Natural killer cell (primary cell): ENCODE measurements at regions of chr1 and their contacts with region 1.

Region 1: DNA sequence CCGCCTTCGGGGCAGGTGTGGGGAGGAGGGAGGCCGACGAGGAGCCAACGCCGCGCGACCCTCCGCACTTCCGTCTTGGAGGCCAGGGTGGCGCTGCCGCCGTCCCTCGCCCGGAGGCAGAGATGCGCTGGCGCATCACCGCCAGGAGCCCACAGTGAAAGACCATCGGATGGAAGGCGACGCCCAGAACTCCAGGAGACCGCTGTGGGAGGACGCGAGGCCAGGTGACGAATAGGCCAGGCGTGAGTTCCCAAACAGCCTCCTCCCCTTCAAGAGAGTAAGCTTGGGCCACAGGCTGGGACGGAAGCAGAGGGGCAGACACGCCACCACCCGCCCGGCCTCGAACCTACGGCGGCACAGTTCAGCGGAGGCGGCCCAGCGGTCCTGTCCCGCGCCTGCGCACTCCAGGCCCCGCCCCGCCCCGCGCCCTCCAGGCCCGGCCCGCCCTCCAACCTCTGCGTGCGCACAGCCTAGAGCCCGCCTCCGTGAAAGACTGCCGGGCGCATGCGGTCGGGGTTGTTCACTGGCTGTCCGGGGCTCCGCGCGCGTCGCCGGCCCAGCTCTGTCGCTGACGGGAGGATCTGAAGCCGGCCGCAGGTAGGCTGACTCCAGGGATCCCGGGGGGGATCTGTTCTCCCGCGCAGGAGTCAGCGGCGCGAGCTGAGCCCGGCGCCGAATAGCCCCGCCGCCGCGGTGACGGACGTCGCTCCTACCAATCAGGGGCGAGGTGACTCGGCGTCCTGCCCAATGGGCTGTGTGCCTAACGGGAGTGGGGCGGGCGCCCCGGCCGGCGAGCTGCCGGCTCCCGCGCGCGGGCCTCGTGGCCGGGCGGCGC is at the start of gene CTPS1:
- DNase-seq: peak; percentile 95
- ATAC-seq: peak; percentile 82 to 91 (median 85)
- H3K4me3 ChIP-seq: peak within 1 kb of the TSS; percentile 90
- H3K4me3 Mint-ChIP-seq: peak within 1 kb of the TSS; percentile 96
- H3K27ac ChIP-seq: peak within 1 kb of the TSS; percentile 97
- H3K27ac Mint-ChIP-seq: peak within 1 kb of the TSS; percentile 89 to 92
- H3K4me1 ChIP-seq: peaks cover 17% of the 10 kb centered on the region
- H3K4me1 Mint-ChIP-seq: peaks cover 13 to 25% of the 10 kb centered on the region in 2 donors
- H3K27me3 ChIP-seq: no peaks in the 10 kb centered on the region
- H3K27me3 Mint-ChIP-seq: no peaks in the 10 kb centered on the region
- CTCF ChIP-seq: no peak
- total RNA-seq, gene CTPS1: 90.5 to 128 (median 99.0) TPM

Region 2: DNA sequence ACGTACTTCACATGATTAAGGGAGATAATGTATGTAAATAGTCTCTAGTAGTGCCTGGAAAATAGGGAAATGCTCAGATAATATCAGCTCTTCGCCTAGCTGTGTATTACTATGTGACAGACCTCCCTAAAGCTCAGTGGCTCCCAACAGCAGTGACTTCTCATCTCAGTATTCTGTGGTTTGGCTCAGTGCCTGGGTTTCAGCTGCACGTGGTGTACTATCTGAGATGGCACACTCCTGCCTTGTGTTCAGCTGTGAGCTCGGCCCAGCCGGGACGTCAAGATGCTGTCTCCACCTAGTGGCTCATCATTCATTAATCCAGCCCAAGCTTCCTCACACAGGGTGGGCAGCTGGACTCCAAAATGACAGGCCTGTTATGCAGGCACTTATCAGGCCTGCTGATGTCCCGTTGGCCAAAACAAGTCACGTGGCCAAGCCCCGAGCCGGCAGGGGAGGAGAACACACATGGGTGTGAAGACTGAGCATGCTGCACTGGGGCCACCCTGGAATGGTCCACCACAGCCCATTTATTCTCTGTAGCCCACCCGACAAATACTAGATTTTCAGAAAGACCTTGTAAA is 24.3 kb after region 1 on chr1:
- intact Hi-C with region 1: loop called (anchors 1 kb)
- DNase-seq: peak; percentile 70 to 94
- ATAC-seq: peak; percentile 94 to 97 (median 96)
- H3K4me3 ChIP-seq: no peak overlapping the region
- H3K4me3 Mint-ChIP-seq: peak overlapping the region; percentile 9
- H3K27ac ChIP-seq: peak overlapping the region; percentile 4
- H3K27ac Mint-ChIP-seq: peak overlapping the region; percentile 65 to 70
- H3K4me1 ChIP-seq: peaks cover 12% of the 10 kb centered on the region
- H3K4me1 Mint-ChIP-seq: peaks cover 18 to 22% of the 10 kb centered on the region in 2 donors
- H3K27me3 ChIP-seq: no peaks in the 10 kb centered on the region
- H3K27me3 Mint-ChIP-seq: no peaks in the 10 kb centered on the region
- CTCF ChIP-seq: peak; percentile 47

Region 3: GRCh38 chr1:41093826-41094225 is 114.4 kb after region 1 on chr1:
- intact Hi-C with region 1: no loop called
- DNase-seq: no peak
- ATAC-seq: no peak
- H3K4me3 ChIP-seq: no peak overlapping the region
- H3K4me3 Mint-ChIP-seq: no peak overlapping the region
- H3K27ac ChIP-seq: no peak overlapping the region
- H3K27ac Mint-ChIP-seq: no peak overlapping the region
- H3K4me1 ChIP-seq: no peaks in the 10 kb centered on the region
- H3K4me1 Mint-ChIP-seq: no peaks in the 10 kb centered on the region
- H3K27me3 ChIP-seq: no peaks in the 10 kb centered on the region
- H3K27me3 Mint-ChIP-seq: no peaks in the 10 kb centered on the region
- CTCF ChIP-seq: no peak